Ovary (tissue), 10 donors: ENCODE measurements at regions of chr17 and their contacts with region 1.

Region 1: GRCh38 chr17:1516388-1517161 is at the start of gene INPP5K:
- DNase-seq: peak; percentile 97 to 99 (median 98)
- H3K4me3 ChIP-seq: peak within 1 kb of the TSS; percentile 98
- H3K27ac ChIP-seq: peak within 1 kb of the TSS; percentile 71 to 87
- H3K4me1 ChIP-seq: peaks cover 2% of the 10 kb centered on the region
- H3K27me3 ChIP-seq: no peaks in the 10 kb centered on the region
- CTCF ChIP-seq: peak in 2 of 3 donors; percentile 40 to 41
- EP300 ChIP-seq: peak; percentile 43
- POLR2A ChIP-seq: peak; percentile 54
- total RNA-seq, gene INPP5K: 23.0 to 39.1 (median 28.3) TPM

Region 2: DNA sequence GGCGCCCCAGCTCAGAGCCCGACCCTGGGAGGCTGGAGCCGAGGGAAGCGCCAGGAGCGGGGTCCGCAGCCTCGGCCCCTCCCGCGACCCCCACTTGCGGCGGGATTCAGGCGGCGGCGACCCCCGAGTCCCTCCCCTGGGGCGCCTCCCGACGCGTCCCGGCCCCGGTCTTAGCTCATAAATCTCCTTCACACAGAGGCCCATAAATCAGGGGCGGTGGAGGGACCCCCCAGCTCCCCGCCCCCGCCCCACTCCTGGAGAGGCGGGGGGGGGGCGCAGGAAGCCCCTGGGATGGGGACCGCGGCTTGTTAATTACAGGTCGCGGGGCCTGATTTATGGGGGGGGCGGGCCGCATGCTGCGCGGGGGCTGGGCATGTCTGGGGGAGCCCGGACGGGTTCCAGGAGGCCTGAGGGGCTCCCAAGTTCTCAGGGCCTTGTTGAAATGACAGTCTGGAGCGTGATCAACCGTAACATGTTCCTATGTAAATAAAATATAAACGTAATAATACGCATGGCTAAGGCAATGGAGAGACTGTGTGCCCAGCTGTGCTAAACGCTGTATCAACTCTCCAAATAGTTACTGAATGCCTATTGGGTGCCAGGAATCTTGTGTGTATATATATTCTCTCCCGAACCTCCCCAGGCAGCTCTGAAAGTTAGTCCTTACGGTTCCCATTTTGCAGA is 256.3 kb before region 1 on chr17:
- intact Hi-C with region 1: loop called in 2 of 4 experiments (anchors 5 kb)
- DNase-seq: no peak
- H3K4me3 ChIP-seq: peak overlapping the region; percentile 36
- H3K27ac ChIP-seq: no peak overlapping the region
- H3K4me1 ChIP-seq: no peaks in the 10 kb centered on the region
- H3K27me3 ChIP-seq: no peaks in the 10 kb centered on the region
- CTCF ChIP-seq: no peak
- EP300 ChIP-seq: no peak
- POLR2A ChIP-seq: no peak

Region 3: DNA sequence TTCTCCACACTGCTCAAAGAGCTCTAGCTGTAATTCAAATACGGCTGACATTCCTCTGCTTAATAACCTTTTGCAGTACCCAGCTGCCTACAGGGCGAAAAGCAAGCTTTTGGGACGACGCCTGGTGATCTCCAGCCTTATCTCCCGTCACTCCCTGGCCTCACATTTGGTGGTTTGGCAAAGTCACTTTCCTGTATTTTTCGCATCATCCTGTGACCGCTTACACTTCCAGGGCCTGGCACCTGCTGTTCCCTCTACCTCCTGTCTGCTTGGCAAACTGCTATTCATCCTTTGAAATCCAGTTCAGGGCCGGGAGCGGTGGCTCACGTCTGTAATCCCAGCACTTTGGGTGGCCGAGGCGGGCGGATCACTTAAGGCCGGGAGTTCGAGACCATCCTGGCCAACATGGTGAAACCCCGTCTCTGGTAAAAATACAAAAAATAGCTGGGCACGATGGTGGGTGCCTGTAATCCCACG is 249.1 kb before region 1 on chr17:
- intact Hi-C with region 1: loop called in 3 of 4 experiments (anchors 5 to 10 kb)
- DNase-seq: peak in 3 of 5 donors; percentile 36 to 54 (median 40)
- H3K4me3 ChIP-seq: peak overlapping the region; percentile 61
- H3K27ac ChIP-seq: peak overlapping the region; percentile 66 to 68
- H3K4me1 ChIP-seq: no peaks in the 10 kb centered on the region
- H3K27me3 ChIP-seq: no peaks in the 10 kb centered on the region
- CTCF ChIP-seq: no peak
- EP300 ChIP-seq: no peak
- POLR2A ChIP-seq: no peak

Region 4: DNA sequence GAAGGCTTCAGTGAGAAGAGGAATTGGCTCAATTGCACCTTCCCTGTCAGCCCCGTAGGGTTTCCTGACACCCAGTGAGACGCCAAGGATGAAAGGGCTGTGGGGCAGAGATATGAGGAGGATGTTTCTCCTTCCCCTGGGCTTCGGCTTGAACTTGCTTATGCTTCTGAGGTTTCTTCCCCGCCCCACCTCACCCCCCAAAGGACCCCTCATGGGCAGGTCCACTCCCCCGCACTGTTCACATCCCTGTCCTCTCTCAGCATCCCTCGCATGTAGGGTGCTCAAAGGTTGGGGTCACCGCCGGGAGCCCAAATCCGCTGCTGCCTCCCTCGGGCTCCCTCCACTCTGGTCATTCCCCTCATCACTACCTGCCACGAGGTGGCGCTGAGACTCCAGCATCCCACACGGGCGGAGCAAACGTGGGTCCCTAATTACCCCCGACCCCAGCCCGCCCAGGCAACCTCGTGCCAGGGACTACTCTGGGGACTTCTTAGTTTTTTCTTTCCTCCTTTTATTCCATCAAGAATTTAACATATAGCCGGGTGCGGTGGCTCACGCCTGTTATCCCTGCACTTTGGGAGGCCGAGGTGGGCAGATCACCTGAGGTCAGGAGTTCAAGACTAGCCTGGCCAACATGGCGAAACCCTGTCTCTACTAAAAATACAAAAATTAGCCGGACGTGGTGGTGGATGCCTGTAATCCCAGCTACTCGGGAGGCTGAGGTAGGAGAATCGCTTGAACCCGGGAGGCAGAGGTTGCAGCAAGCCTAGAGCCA is 240.4 kb before region 1 on chr17:
- intact Hi-C with region 1: loop called in 2 of 4 experiments (anchors 5 to 10 kb)
- DNase-seq: peak; percentile 43 to 81 (median 66)
- H3K4me3 ChIP-seq: no peak overlapping the region
- H3K27ac ChIP-seq: no peak overlapping the region
- H3K4me1 ChIP-seq: no peaks in the 10 kb centered on the region
- H3K27me3 ChIP-seq: no peaks in the 10 kb centered on the region
- CTCF ChIP-seq: peak in 2 of 3 donors; percentile 45 to 57
- EP300 ChIP-seq: no peak
- POLR2A ChIP-seq: no peak

Region 5: GRCh38 chr17:1365445-1366039 is 151.0 kb before region 1 on chr17:
- intact Hi-C with region 1: loop called in 3 of 4 experiments (anchors 2 to 10 kb)
- DNase-seq: peak in 4 of 5 donors; percentile 31 to 64 (median 46)
- H3K4me3 ChIP-seq: no peak overlapping the region
- H3K27ac ChIP-seq: no peak overlapping the region
- H3K4me1 ChIP-seq: peaks cover 18% of the 10 kb centered on the region
- H3K27me3 ChIP-seq: no peaks in the 10 kb centered on the region
- CTCF ChIP-seq: peak; percentile 61 to 87 (median 86)
- EP300 ChIP-seq: no peak
- POLR2A ChIP-seq: no peak

Region 6: DNA sequence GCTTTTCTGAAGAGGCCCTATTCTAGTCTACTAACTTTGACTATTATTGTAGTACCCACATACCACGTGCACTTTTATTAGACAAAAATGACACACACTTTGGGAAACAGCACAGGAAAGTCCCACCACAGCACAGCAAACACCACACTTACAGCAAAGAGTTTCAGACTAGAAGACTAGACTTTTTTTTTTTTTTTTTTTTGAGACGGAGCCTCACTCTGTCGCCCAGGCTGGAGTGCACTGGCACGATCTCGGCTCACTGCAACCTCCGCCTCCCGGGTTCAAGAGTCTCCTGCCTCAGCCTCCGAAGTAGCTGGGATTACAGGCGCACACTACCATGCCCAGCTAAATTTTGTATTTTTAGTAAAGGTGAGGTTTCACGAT is 136.7 kb before region 1 on chr17:
- intact Hi-C with region 1: loop called in 1 of 4 experiments (anchors 5 kb)
- DNase-seq: no peak
- H3K4me3 ChIP-seq: no peak overlapping the region
- H3K27ac ChIP-seq: no peak overlapping the region
- H3K4me1 ChIP-seq: peaks cover 38% of the 10 kb centered on the region
- H3K27me3 ChIP-seq: no peaks in the 10 kb centered on the region
- CTCF ChIP-seq: no peak
- EP300 ChIP-seq: no peak
- POLR2A ChIP-seq: no peak

Region 7: DNA sequence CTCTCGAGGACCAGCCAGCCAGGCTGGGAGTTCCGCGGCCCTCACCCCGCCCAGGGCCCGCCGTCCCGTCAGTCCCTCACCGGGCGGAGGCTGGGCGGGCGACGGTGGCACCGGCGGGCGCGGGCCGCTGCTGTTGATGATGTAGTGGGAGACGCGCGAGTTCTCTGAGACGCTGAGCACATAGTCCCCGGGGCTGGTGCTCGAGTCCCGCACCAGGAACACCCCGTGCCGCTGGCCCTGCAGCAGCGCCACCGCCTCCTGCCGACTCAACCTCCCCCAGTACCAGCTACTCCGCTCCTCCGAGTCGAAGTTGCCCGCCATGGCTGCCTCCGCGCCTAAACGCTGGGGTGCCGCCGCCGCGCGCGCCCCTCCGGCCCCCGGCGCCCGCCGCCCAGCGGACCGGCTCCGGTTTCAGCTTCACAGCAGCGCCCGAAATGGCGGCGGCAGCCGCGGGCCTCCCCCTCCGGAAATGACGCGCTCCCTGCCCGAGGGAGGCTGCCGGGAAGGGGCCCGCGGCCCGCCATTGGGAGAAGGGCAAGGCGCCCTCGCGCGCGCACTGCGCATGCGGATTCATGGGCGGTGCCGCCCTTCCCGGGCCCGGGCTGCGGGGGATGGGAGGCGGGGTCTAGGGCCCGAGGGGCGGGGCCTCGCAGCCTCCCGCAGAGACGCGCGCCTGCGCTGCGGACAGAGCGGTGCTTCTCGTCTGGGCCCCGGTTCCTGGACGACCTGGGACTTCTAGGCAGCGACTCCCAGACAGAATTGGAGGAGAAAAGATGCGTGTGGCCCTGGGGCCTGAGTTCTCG is 60.6 kb before region 1 on chr17 and contains the start of gene CRK:
- intact Hi-C with region 1: loop called in 2 of 4 experiments (anchors 5 to 10 kb)
- DNase-seq: peak; percentile 96 to 99 (median 98)
- H3K4me3 ChIP-seq: peak within 1 kb of the TSS; percentile 72
- H3K27ac ChIP-seq: peak within 1 kb of the TSS; percentile 84 to 93
- H3K4me1 ChIP-seq: peaks cover 9% of the 10 kb centered on the region
- H3K27me3 ChIP-seq: no peaks in the 10 kb centered on the region
- CTCF ChIP-seq: peak in 2 of 3 donors; percentile 24 to 28
- EP300 ChIP-seq: peak; percentile 63
- POLR2A ChIP-seq: peak; percentile 97
- total RNA-seq, gene CRK: 40.0 to 60.6 (median 48.8) TPM